AG04449 (cell line): ENCODE measurements at regions of chr20 and their contacts with region 1.

Region 1: GRCh38 chr20:3786665-3787323 is at the start of gene CENPB:
- DNase-seq: no peak
- H3K4me3 ChIP-seq: peak within 1 kb of the TSS; percentile 80
- CTCF ChIP-seq: peak; percentile 70

Region 2: DNA sequence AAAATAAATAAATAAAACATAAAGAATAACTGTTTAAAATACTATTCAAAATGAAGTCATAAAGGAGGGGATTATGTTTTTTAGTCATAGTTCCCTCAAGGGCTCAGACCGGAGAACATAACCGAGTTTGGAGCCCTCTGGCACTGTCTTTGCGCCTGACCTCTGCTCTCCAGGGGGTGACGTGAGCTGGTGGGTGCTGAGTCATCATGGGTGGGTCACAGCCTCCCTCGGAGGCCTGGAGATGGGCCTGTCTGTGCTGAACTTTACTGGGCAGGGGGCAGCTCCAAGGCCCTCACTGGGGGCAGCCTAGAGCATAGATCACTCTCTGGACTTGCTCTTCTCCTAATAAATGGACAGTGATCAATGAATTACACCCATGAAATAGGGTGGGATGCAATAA is 56.7 kb after region 1 on chr20:
- CTCF ChIA-PET with region 1: interaction called, 20 read pairs
- POLR2A ChIA-PET with region 1: interaction called, 4 read pairs
- DNase-seq: no peak
- H3K4me3 ChIP-seq: no peak overlapping the region
- CTCF ChIP-seq: no peak

Region 3: DNA sequence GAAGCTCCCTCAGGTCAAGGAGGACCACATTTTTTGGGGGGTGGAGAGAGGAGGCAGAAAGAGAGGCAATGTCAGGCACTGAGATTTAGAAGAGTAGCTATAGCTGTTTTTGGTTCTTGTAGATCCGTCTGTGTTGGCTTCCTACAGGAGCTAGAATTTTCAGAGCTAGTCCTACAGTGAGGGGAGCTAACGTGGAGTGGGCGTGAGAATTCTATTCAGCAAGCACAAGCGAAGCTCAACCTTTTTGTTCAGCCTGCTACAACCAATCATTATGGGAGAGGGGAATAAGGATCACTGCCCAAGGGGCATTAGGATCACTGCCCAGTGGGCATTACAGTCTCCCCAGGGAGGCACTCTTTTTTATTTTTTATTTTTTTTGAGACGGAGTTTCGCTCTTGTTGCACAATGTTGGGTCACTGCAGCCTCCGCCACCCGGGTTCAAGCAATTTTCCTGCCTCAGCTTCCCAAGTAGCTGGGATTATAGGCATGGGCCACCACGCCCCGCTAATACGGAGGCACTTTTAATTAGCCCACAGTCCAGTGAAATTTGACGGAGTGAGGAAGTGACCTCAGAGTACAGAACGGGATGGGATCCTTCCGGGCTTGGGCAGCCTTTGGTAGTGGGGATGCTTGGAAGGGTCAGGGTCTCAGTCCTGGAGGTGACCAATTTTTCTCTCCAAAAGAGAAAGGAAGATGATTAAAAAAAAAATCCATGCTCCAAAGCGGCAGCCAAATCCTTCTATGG is 101.3 kb after region 1 on chr20:
- CTCF ChIA-PET with region 1: interaction called, 21 read pairs
- POLR2A ChIA-PET with region 1: no interaction called
- DNase-seq: no peak
- H3K4me3 ChIP-seq: peak overlapping the region; percentile 98
- CTCF ChIP-seq: no peak